GM12878 (cell line): ENCODE measurements at regions of chr9 and their contacts with region 1.

Region 1: DNA sequence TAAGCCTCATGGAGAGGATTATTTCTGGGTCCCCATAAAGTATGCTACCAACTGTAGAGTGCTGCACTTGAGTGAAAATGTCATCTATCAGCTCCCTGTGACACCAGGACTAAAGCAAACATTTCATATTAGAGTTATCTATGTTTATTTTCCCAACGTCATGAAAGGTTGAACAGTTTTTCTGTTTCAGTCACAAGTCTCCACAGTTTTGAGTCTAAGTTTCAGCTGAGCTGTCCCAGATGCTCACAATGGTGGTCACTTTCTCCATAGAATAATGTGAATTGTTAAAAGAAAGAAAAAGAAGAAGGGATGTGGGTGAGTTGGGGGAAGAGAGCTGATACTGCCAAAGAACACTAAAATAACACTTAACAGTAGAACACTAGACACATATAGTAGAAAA is 126.3 kb upstream of the C9orf72 start:
- DNase-seq: no peak
- ATAC-seq: no peak
- H3K4me3 ChIP-seq: no peak overlapping the region
- H3K27ac ChIP-seq: no peak overlapping the region
- H3K4me1 ChIP-seq: no peaks in the 10 kb centered on the region
- H3K27me3 ChIP-seq: no peaks in the 10 kb centered on the region
- CTCF ChIP-seq: no peak
- EP300 ChIP-seq: no peak
- POLR2A ChIP-seq: no peak
- RAD21 ChIP-seq: no peak

Region 2: GRCh38 chr9:27679338-27679737 is 20.3 kb before region 1 on chr9:
- CTCF ChIA-PET with region 1: no interaction called
- POLR2A ChIA-PET with region 1: no interaction called
- RAD21 ChIA-PET with region 1: no interaction called
- SMC1A ChIA-PET with region 1: no interaction called
- in situ Hi-C with region 1: no loop called
- intact Hi-C with region 1: loop called (anchors 1 kb)
- DNase-seq: no peak
- ATAC-seq: no peak
- H3K4me3 ChIP-seq: no peak overlapping the region
- H3K27ac ChIP-seq: no peak overlapping the region
- H3K4me1 ChIP-seq: no peaks in the 10 kb centered on the region
- H3K27me3 ChIP-seq: no peaks in the 10 kb centered on the region
- CTCF ChIP-seq: no peak
- EP300 ChIP-seq: no peak
- POLR2A ChIP-seq: no peak
- RAD21 ChIP-seq: no peak